MCF 10A (cell line): ENCODE measurements at regions of chr16 and their contacts with region 1.

Region 1: GRCh38 chr16:82580298-82580890 is 46.4 kb upstream of the CDH13 start:
- DNase-seq: peak; percentile 38
- H3K4me3 Mint-ChIP-seq: no peak overlapping the region
- H3K27ac Mint-ChIP-seq: no peak overlapping the region
- H3K4me1 Mint-ChIP-seq: no peaks in the 10 kb centered on the region
- H3K27me3 Mint-ChIP-seq: peaks cover 65% of the 10 kb centered on the region
- CTCF ChIP-seq: peak; percentile 30

Region 2: DNA sequence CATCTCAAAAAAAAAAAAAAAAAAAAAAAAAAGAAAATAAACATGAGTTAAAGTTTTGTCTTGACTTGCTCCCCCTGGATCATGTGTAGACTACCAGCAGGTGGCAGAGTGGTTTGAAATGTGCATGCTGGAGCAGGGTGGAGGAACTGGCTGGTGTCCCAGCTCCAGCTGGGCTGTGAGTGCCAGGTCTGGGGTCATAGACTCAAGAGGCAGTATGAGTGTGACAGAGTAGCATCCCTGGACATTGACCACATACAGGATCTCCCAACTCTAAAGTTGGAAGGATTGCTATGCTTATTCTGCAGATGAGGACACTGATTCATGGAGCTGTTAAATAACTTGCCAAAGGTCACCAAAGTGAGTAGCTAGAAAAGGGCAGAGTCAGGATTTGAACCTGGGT is 212.4 kb before region 1 on chr16:
- CTCF ChIA-PET with region 1: interaction called, 9 read pairs
- POLR2A ChIA-PET with region 1: no interaction called
- intact Hi-C with region 1: loop called (anchors 2 kb)
- DNase-seq: peak; percentile 52
- H3K4me3 Mint-ChIP-seq: no peak overlapping the region
- H3K27ac Mint-ChIP-seq: no peak overlapping the region
- H3K4me1 Mint-ChIP-seq: no peaks in the 10 kb centered on the region
- H3K27me3 Mint-ChIP-seq: peaks cover 57% of the 10 kb centered on the region
- CTCF ChIP-seq: peak; percentile 21